Esophagus squamous epithelium (tissue), 5 donors: ENCODE measurements at regions of chr10 and their contacts with region 1.

Region 1: GRCh38 chr10:93288654-93289634 is 193.2 kb downstream of the MYOF start:
- DNase-seq: no peak
- H3K4me3 ChIP-seq: no peak overlapping the region
- H3K27ac ChIP-seq: no peak overlapping the region
- H3K4me1 ChIP-seq: no peaks in the 10 kb centered on the region
- H3K27me3 ChIP-seq: no peaks in the 10 kb centered on the region
- CTCF ChIP-seq: peak; percentile 28 to 88 (median 82)
- POLR2A ChIP-seq: no peak

Region 2: GRCh38 chr10:93115661-93116383 is 173.1 kb before region 1 on chr10:
- intact Hi-C with region 1: loop called (anchors 10 kb)
- DNase-seq: no peak
- H3K4me3 ChIP-seq: no peak overlapping the region
- H3K27ac ChIP-seq: no peak overlapping the region
- H3K4me1 ChIP-seq: no peaks in the 10 kb centered on the region
- H3K27me3 ChIP-seq: peaks cover 0 to 13% (median 0%) of the 10 kb centered on the region in 4 donors
- CTCF ChIP-seq: peak in 5 of 6 experiments; percentile 29 to 59 (median 38)
- POLR2A ChIP-seq: no peak

Region 3: GRCh38 chr10:94027196-94027595 is 738.3 kb after region 1 on chr10:
- intact Hi-C with region 1: no loop called
- DNase-seq: no peak
- H3K4me3 ChIP-seq: no peak overlapping the region
- H3K27ac ChIP-seq: no peak overlapping the region
- H3K4me1 ChIP-seq: no peaks in the 10 kb centered on the region
- H3K27me3 ChIP-seq: no peaks in the 10 kb centered on the region
- CTCF ChIP-seq: no peak
- POLR2A ChIP-seq: no peak

Region 4: DNA sequence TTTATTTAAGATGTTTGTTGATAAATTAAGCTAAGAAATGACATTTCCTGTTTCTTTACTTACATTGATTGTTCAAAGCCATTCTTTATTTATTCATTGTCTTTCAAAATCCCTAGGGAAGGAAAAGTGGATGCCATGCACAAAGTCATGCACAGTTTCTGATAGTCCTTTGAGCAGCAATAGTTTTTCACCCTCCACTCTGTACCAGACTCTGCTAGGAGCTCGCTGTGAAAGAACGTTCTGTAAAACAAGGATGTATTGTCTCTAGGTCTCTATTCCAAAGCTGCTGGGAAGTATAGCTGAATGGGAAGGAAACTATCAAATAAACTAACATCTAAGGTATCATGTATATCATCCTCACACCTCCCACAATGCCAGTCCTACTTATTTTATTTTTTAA is 1081.6 kb after region 1 on chr10:
- intact Hi-C with region 1: no loop called
- DNase-seq: no peak
- H3K4me3 ChIP-seq: no peak overlapping the region
- H3K27ac ChIP-seq: no peak overlapping the region
- H3K4me1 ChIP-seq: no peaks in the 10 kb centered on the region
- H3K27me3 ChIP-seq: peaks cover 0 to 24% (median 0%) of the 10 kb centered on the region in 4 donors
- CTCF ChIP-seq: no peak
- POLR2A ChIP-seq: no peak